PC-3 (cell line): ENCODE measurements at regions of chr2 and their contacts with region 1.

Region 1: DNA sequence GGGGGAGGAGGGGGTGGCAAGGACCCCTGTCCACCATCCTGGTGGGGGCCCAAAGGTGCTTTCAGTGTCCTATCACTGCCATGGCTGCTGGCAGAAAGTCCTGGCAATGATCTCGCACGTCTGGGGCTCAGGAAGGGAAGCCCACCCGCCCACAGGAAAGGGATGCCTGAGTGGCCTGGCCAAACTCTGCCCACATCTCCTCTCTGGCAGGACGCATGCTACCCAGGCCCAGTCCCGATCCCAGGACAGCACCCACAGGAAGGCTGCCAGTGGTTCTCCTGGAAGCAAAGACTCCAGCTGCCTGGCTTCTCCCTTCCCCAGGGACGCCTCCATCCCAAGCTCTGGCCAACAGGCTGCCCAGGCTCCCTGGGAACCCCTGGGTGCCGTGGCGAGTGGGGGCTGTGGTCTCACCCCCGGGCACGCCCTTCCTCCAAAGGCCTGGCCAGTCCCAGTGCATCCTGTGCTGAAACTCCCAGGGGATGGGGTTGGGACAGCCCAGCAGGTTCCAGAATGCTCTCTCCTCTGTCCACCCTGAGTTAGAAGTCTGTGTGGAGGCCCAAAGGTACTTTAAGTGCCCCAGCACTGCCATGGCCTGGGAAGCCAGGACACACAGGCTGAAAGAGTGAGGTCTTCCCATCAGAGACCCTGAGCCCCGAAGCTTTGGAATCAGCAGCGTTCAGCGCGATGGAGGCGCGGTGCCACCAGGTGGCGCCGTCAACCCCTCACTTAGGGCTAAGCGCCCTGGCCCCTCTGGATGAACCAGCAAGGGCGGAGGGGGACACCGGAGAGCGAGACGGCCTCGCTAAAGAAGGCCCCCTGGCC is 29.8 kb upstream of the TAF1B start:
- DNase-seq: peak; percentile 80
- ATAC-seq: peak; percentile 76
- H3K4me3 ChIP-seq: peak overlapping the region; percentile 16; the same call in 1 of the 2 replicates
- H3K27ac ChIP-seq: no peak overlapping the region
- H3K4me1 ChIP-seq: peaks cover 41% of the 10 kb centered on the region
- H3K27me3 ChIP-seq: no peaks in the 10 kb centered on the region
- CTCF ChIP-seq: peak; percentile 96

Region 2: DNA sequence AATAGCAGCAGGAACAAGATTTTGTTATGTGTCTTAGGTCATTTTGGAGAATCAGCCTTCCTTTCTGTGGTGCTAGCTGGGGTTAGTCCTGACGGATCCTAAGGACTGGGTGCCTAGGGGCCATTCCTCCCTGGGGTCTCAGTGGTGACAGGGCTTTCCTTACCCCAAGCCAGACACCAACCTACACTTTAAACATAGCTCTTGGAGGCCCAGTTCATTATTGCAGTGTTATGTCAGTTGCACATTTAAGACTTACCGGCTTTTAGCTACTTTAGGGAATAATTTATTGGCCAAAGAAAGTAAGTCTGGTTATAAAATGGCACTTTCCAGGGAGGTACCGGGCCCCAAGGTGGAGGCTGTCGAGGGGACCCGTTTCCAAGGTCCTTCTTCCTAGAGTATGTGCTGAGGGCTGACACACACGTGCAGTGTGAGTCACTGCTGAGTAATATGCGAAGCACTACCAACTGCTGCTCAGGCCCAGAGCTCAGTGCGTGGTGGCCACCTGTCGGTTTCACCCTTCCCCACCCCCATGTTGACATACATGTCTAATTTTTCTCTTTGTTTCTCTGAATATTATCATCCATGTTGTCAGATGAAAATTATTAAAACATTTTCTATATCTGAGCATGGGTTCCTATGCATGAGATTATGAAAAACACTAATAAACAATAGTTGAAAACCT is 101.0 kb after region 1 on chr2:
- CTCF ChIA-PET with region 1: interaction called, 5 read pairs
- POLR2A ChIA-PET with region 1: no interaction called
- intact Hi-C with region 1: loop called (anchors 1 kb)
- DNase-seq: peak; percentile 92
- ATAC-seq: peak; percentile 100
- H3K4me3 ChIP-seq: no peak overlapping the region
- H3K27ac ChIP-seq: 0 out of 2 replicates have a peak overlapping the region, but pooled peaks have one; percentile 17
- H3K4me1 ChIP-seq: peaks cover 11% of the 10 kb centered on the region
- H3K27me3 ChIP-seq: no peaks in the 10 kb centered on the region
- CTCF ChIP-seq: peak; percentile 72